Activated naive CD4-positive, alpha-beta T cell treated with anti-CD3 and anti-CD28 coated beads for 36 hours (primary cell): ENCODE measurements at regions of chr1 and their contacts with region 1.

Region 1: DNA sequence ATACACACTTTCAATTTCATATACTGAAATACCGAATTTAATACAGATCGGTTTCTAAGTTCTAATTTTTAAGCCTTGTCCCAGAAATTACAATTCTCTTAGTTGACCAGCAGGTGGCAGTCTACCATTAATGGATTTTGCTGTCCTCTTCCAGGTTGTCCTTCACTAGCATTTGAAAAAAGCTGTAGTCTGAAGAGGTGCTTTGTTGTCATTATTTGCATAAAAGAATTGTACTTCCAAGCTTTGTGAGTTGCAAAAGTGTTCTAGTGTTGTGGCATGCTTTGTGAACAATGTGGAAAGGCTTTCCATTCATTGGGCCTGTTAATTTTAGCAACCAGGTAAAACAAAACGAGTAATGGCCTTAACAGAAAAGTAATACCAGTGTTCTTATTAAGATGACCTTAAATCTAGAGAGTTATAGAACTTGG is 193.6 kb downstream of the RPS6KC1 start:
- DNase-seq: peak; percentile 29
- H3K4me3 Mint-ChIP-seq: no peak overlapping the region
- H3K27ac Mint-ChIP-seq: no peak overlapping the region
- H3K4me1 Mint-ChIP-seq: no peaks in the 10 kb centered on the region
- H3K27me3 Mint-ChIP-seq: no peaks in the 10 kb centered on the region

Region 2: GRCh38 chr1:213122514-213122929 is 122.2 kb before region 1 on chr1:
- CTCF ChIA-PET with region 1: interaction called, 3 read pairs
- intact Hi-C with region 1: loop called (anchors 5 kb)
- DNase-seq: no peak
- H3K4me3 Mint-ChIP-seq: no peak overlapping the region
- H3K27ac Mint-ChIP-seq: no peak overlapping the region
- H3K4me1 Mint-ChIP-seq: no peaks in the 10 kb centered on the region
- H3K27me3 Mint-ChIP-seq: no peaks in the 10 kb centered on the region

Region 3: DNA sequence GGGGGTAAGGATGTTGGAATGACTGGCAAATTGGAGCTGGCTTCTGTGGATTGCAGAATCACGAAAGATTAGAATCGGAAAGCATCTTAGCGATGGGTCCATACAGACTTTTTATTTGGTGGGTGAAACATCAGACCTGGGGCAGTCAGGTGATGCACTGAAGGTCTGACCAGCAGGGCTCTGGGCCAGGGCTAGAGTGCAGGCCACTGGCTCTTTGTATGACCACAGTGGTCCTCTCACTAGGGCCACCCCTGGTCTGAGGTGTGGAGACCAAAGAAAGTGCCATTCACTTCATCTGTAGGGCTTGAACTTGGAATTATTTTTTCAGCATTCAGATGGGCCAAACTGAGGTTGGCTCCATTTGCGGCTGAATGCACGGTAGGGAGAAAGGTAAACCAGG is 112.7 kb after region 1 on chr1:
- CTCF ChIA-PET with region 1: no interaction called
- intact Hi-C with region 1: loop called (anchors 10 kb)
- DNase-seq: no peak
- H3K4me3 Mint-ChIP-seq: no peak overlapping the region
- H3K27ac Mint-ChIP-seq: no peak overlapping the region
- H3K4me1 Mint-ChIP-seq: no peaks in the 10 kb centered on the region
- H3K27me3 Mint-ChIP-seq: peaks cover 2% of the 10 kb centered on the region

Region 4: GRCh38 chr1:214584805-214585766 is 1340.4 kb after region 1 on chr1:
- CTCF ChIA-PET with region 1: no interaction called
- intact Hi-C with region 1: loop called (anchors 10 kb)
- DNase-seq: no peak
- H3K4me3 Mint-ChIP-seq: no peak overlapping the region
- H3K27ac Mint-ChIP-seq: no peak overlapping the region
- H3K4me1 Mint-ChIP-seq: peaks cover 2% of the 10 kb centered on the region
- H3K27me3 Mint-ChIP-seq: no peaks in the 10 kb centered on the region